ENCODE measurements at regions of chr2 and their contacts with region 1.

Region 1: DNA sequence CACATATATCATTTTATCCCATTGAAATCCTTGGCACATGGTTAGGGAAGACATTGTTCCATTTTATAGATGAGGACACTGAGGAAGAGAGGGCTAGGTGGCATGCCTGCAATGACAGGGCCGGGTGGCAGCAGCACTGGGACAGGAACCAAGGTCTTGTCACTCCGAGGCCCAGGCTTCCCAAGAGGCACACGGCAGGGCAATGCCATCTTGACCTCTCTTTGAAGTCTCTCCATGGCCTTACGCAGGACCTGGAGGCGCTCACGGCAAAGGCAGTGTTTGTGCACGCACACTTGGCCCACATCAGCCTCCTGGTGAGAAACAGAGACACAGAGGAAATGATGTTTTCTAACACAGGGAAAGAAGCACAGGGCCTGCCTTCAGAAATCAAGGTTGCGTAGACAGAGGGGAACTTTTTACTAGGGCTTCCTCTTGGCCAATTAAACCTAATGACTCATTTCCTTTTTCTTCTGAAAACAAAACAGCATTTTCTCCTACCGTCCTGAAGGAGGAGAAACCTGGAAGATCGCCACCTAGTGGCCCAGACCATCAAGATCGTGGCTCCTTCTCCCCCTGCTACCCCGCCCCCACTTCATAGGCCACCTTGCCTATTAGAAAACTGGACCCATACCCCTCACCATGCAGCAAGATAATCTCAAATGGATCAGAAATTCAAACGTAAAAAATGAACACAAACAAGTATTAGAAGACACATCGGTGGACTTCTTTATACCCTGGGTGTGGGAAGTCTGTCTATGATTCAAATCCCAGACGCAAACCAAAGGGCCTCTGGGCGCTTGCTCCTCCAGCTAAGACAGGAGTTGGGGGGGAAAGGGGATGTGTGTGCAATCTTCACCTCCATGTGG is 74.6 kb upstream of the SP3 start:
- DNase-seq: peak; percentile 96
- H3K4me3 ChIP-seq: no peak overlapping the region
- H3K27ac ChIP-seq: peak overlapping the region; percentile 78
- H3K4me1 ChIP-seq: peaks cover 6% of the 10 kb centered on the region
- H3K27me3 ChIP-seq: no peaks in the 10 kb centered on the region
- CTCF ChIP-seq: peak; percentile 91

Region 2: GRCh38 chr2:173402405-173402974 is 637.3 kb before region 1 on chr2:
- CTCF ChIA-PET with region 1: no interaction called
- POLR2A ChIA-PET with region 1: no interaction called
- intact Hi-C with region 1: loop called (anchors 10 kb)
- DNase-seq: peak; percentile 82
- H3K4me3 ChIP-seq: peak overlapping the region; percentile 13
- H3K27ac ChIP-seq: no peak overlapping the region
- H3K4me1 ChIP-seq: peaks cover 10% of the 10 kb centered on the region
- H3K27me3 ChIP-seq: peaks cover 42% of the 10 kb centered on the region
- CTCF ChIP-seq: peak; percentile 91

Region 3: GRCh38 chr2:173504372-173504771 is 535.4 kb before region 1 on chr2:
- CTCF ChIA-PET with region 1: no interaction called
- POLR2A ChIA-PET with region 1: no interaction called
- intact Hi-C with region 1: no loop called
- DNase-seq: no peak
- H3K4me3 ChIP-seq: no peak overlapping the region
- H3K27ac ChIP-seq: no peak overlapping the region
- H3K4me1 ChIP-seq: no peaks in the 10 kb centered on the region
- H3K27me3 ChIP-seq: peaks cover 32% of the 10 kb centered on the region
- CTCF ChIP-seq: no peak

Region 4: DNA sequence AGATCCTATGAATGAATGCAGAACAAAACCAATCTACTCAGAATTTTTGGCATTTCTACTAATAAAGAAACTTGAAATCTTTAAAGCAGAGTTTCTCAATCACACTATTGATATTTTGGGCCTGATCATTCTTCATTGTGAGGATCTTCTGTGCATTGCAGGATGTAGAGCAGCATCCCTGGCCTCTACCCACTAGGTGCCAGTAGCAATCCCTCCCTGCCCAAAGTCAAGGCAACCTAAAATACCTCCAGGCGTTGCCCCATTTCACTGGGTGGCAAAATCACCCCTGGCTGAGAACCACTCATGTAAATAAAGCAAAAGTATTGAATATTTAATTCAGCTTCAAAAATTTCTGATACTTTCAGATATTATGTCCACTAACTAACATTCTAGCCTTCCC is 287.6 kb before region 1 on chr2:
- CTCF ChIA-PET with region 1: no interaction called
- POLR2A ChIA-PET with region 1: no interaction called
- intact Hi-C with region 1: loop called (anchors 10 kb)
- DNase-seq: peak; percentile 28
- H3K4me3 ChIP-seq: no peak overlapping the region
- H3K27ac ChIP-seq: no peak overlapping the region
- H3K4me1 ChIP-seq: peaks cover 11% of the 10 kb centered on the region
- H3K27me3 ChIP-seq: no peaks in the 10 kb centered on the region
- CTCF ChIP-seq: peak; percentile 44; the same call in 1 of the 2 replicates

Region 5: DNA sequence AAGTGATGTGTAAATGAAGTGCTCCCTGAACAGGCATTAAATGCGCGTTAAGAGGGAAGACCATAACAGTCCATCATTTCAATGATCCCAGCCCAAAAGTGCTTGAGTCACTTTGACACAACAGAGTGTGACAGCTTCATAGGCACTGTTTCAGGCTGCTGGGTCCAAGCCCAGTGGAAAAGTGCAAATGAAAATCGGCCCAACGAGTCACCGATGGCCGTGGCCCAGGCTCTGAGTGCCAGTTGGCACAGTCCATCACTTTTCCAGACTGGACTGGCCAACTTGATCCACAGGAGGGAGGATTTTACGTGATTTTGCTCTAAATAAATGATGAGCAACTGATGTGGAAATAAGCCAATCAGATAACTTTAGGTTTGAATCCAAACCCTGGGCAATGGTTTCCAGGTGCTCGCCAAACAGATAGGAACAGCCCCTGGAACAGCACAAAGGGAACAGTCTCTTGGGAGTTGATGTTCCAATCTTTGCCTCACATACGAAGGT is 188.6 kb before region 1 on chr2:
- CTCF ChIA-PET with region 1: no interaction called
- POLR2A ChIA-PET with region 1: no interaction called
- intact Hi-C with region 1: no loop called
- DNase-seq: no peak
- H3K4me3 ChIP-seq: no peak overlapping the region
- H3K27ac ChIP-seq: no peak overlapping the region
- H3K4me1 ChIP-seq: no peaks in the 10 kb centered on the region
- H3K27me3 ChIP-seq: no peaks in the 10 kb centered on the region
- CTCF ChIP-seq: no peak

Region 6: GRCh38 chr2:173965329-173966025 is 74.3 kb before region 1 on chr2 and contains the start of gene SP3:
- CTCF ChIA-PET with region 1: no interaction called
- POLR2A ChIA-PET with region 1: no interaction called
- intact Hi-C with region 1: loop called (anchors 5 kb)
- DNase-seq: peak; percentile 98
- H3K4me3 ChIP-seq: peak within 1 kb of the TSS; percentile 93
- H3K27ac ChIP-seq: peak within 1 kb of the TSS; percentile 99
- H3K4me1 ChIP-seq: peaks cover 7% of the 10 kb centered on the region
- H3K27me3 ChIP-seq: no peaks in the 10 kb centered on the region
- CTCF ChIP-seq: no peak
- total RNA-seq, gene SP3: 84.5 and 90.8 TPM in 2 replicates